ENCODE measurements at regions of chr3 and their contacts with region 1.

Region 1: GRCh38 chr3:31768479-31769123 is 212.5 kb downstream of the OSBPL10 start:
- DNase-seq: peak; percentile 61
- H3K4me3 ChIP-seq: no peak overlapping the region
- H3K27ac ChIP-seq: no peak overlapping the region
- H3K4me1 ChIP-seq: no peaks in the 10 kb centered on the region
- H3K27me3 ChIP-seq: no peaks in the 10 kb centered on the region
- CTCF ChIP-seq: peak; percentile 34

Region 2: DNA sequence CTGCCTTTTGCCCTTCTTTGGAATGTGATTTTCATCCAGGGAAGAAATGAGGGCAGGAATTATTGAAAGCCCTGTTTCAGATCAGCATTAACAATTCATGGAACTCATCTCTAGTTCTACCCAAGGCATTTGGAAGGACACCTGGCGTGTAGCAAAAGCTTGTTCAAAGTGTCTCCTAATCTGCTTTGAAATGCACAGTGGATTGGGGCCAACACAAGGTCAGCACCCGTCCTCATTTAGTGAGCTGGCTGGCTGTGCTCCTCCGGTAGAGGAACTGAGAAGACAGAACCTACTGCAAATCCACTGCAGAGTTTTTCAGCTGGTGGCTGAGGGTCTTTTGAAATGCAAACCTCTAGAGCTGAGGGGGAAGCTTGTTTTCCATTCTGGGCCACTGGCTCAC is 377.5 kb before region 1 on chr3:
- intact Hi-C with region 1: no loop called
- DNase-seq: no peak
- H3K4me3 ChIP-seq: no peak overlapping the region
- H3K27ac ChIP-seq: no peak overlapping the region
- H3K4me1 ChIP-seq: no peaks in the 10 kb centered on the region
- H3K27me3 ChIP-seq: no peaks in the 10 kb centered on the region
- CTCF ChIP-seq: no peak

Region 3: GRCh38 chr3:31550452-31551251 is 217.9 kb before region 1 on chr3:
- intact Hi-C with region 1: loop called (anchors 5 kb)
- DNase-seq: no peak
- H3K4me3 ChIP-seq: no peak overlapping the region
- H3K27ac ChIP-seq: no peak overlapping the region
- H3K4me1 ChIP-seq: no peaks in the 10 kb centered on the region
- H3K27me3 ChIP-seq: no peaks in the 10 kb centered on the region
- CTCF ChIP-seq: peak; percentile 48

Region 4: GRCh38 chr3:31581660-31582059 is 186.9 kb before region 1 on chr3:
- intact Hi-C with region 1: no loop called
- DNase-seq: no peak
- H3K4me3 ChIP-seq: no peak overlapping the region
- H3K27ac ChIP-seq: no peak overlapping the region
- H3K4me1 ChIP-seq: no peaks in the 10 kb centered on the region
- H3K27me3 ChIP-seq: no peaks in the 10 kb centered on the region
- CTCF ChIP-seq: no peak

Measured in colonic mucosa (tissue), 4 donors.